Activated CD4-positive, alpha-beta T cell treated with anti-CD3 and anti-CD28 coated beads, Interleukin-2, amount 10 ng/mL, durations not matched to agents 24 days and 14 days (primary cell): ENCODE measurements at regions of chr6 and their contacts with region 1.

Region 1: GRCh38 chr6:21438237-21438985 is 155.1 kb upstream of the SOX4 start:
- DNase-seq: peak; percentile 79
- H3K4me3 Mint-ChIP-seq: peak overlapping the region; percentile 66
- H3K27ac Mint-ChIP-seq: peak overlapping the region; percentile 76
- H3K4me1 Mint-ChIP-seq: peaks cover 15% of the 10 kb centered on the region
- H3K27me3 Mint-ChIP-seq: peaks cover 25% of the 10 kb centered on the region

Region 2: DNA sequence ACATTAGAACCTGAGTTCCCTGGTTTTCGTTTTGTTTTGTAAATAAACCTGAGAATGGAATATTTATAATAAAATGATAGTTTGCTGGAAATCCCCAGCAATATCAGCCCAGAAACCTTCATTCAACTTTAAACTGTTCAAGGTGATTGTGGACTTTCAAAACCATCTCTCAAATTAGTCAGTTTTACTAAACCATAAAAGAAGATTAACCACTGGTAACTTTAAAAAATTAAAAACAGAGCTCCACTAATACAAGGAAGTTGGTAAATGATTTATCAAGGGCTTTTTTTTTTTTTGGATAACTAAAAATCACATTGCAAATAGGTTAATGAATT is 1236.1 kb before region 1 on chr6:
- intact Hi-C with region 1: loop called (anchors 5 kb)
- DNase-seq: no peak
- H3K4me3 Mint-ChIP-seq: no peak overlapping the region
- H3K27ac Mint-ChIP-seq: peak overlapping the region; percentile 21
- H3K4me1 Mint-ChIP-seq: peaks cover 57% of the 10 kb centered on the region
- H3K27me3 Mint-ChIP-seq: no peaks in the 10 kb centered on the region

Region 3: DNA sequence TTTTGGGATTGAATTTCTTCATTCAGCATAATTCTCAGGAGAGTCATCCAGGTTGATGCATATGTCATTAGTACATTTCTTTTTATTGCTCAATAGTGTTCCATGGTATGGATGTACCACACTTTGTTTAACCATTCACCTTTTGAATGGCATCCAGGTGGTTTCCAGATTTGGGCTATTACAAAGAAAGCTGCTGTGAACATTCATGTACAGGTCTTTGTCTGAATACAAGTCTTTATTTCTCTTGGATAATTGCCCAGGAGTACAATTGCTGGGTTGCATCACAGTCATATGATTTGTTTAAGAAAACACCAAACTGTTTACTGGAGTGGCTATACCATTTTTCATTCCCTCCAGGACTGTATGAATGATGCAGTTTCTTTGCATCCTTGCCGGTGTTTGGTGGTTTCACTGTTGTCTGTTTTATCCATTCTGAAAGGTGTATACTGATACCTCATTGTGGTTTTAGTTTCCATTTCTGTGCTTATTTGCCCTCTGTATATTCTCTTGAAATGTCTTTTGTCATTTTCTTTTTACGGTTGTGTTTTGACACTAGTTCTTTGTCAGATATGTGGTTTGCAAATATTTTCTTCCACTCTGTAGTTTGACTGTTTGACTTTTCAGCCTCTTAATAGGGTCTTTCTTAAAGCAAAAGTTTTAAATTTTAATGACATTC is 895.3 kb before region 1 on chr6:
- intact Hi-C with region 1: loop called (anchors 2 kb)
- DNase-seq: peak; percentile 82
- H3K4me3 Mint-ChIP-seq: peak overlapping the region; percentile 38
- H3K27ac Mint-ChIP-seq: peak overlapping the region; percentile 88
- H3K4me1 Mint-ChIP-seq: peaks cover 43% of the 10 kb centered on the region
- H3K27me3 Mint-ChIP-seq: no peaks in the 10 kb centered on the region

Region 4: GRCh38 chr6:20919677-20920385 is 518.6 kb before region 1 on chr6:
- intact Hi-C with region 1: loop called (anchors 1 kb)
- DNase-seq: no peak
- H3K4me3 Mint-ChIP-seq: no peak overlapping the region
- H3K27ac Mint-ChIP-seq: peak overlapping the region; percentile 68
- H3K4me1 Mint-ChIP-seq: peaks cover 19% of the 10 kb centered on the region
- H3K27me3 Mint-ChIP-seq: no peaks in the 10 kb centered on the region

Region 5: GRCh38 chr6:21213492-21213891 is 224.9 kb before region 1 on chr6:
- intact Hi-C with region 1: no loop called
- DNase-seq: no peak
- H3K4me3 Mint-ChIP-seq: no peak overlapping the region
- H3K27ac Mint-ChIP-seq: no peak overlapping the region
- H3K4me1 Mint-ChIP-seq: no peaks in the 10 kb centered on the region
- H3K27me3 Mint-ChIP-seq: no peaks in the 10 kb centered on the region

Region 6: GRCh38 chr6:21402368-21402767 is 36.0 kb before region 1 on chr6:
- intact Hi-C with region 1: loop called (anchors 1 kb)
- DNase-seq: peak; percentile 57
- H3K4me3 Mint-ChIP-seq: no peak overlapping the region
- H3K27ac Mint-ChIP-seq: peak overlapping the region; percentile 25
- H3K4me1 Mint-ChIP-seq: peaks cover 7% of the 10 kb centered on the region
- H3K27me3 Mint-ChIP-seq: peaks cover 6% of the 10 kb centered on the region